Naive thymus-derived CD4-positive, alpha-beta T cell (primary cell): ENCODE measurements at regions of chr9 and their contacts with region 1.

Region 1: GRCh38 chr9:2158111-2158610 is 143.0 kb downstream of the SMARCA2 start:
- DNase-seq: peak in 8 of 9 donors; percentile 28 to 59 (median 53)
- ATAC-seq: peak; percentile 79
- H3K4me3 ChIP-seq: peak overlapping the region; percentile 46
- H3K4me3 Mint-ChIP-seq: peak overlapping the region; percentile 81 to 92 (median 85)
- H3K27ac ChIP-seq: peak overlapping the region; percentile 52
- H3K27ac Mint-ChIP-seq: peak overlapping the region; percentile 59 to 90 (median 81)
- H3K4me1 ChIP-seq: peaks cover 16 to 22% of the 10 kb centered on the region in 2 donors
- H3K4me1 Mint-ChIP-seq: peaks cover 36 to 86% (median 80%) of the 10 kb centered on the region in 7 donors
- H3K27me3 ChIP-seq: no peaks in the 10 kb centered on the region
- H3K27me3 Mint-ChIP-seq: no peaks in the 10 kb centered on the region

Region 2: GRCh38 chr9:1747417-1747967 is 410.7 kb before region 1 on chr9:
- CTCF ChIA-PET with region 1: no interaction called
- POLR2A ChIA-PET with region 1: no interaction called
- intact Hi-C with region 1: no loop called
- DNase-seq: no peak
- ATAC-seq: no peak
- H3K4me3 ChIP-seq: no peak overlapping the region
- H3K4me3 Mint-ChIP-seq: no peak overlapping the region
- H3K27ac ChIP-seq: no peak overlapping the region
- H3K27ac Mint-ChIP-seq: no peak overlapping the region
- H3K4me1 ChIP-seq: no peaks in the 10 kb centered on the region
- H3K4me1 Mint-ChIP-seq: no peaks in the 10 kb centered on the region
- H3K27me3 ChIP-seq: no peaks in the 10 kb centered on the region
- H3K27me3 Mint-ChIP-seq: peaks cover 0 to 34% (median 16%) of the 10 kb centered on the region in 5 donors

Region 3: DNA sequence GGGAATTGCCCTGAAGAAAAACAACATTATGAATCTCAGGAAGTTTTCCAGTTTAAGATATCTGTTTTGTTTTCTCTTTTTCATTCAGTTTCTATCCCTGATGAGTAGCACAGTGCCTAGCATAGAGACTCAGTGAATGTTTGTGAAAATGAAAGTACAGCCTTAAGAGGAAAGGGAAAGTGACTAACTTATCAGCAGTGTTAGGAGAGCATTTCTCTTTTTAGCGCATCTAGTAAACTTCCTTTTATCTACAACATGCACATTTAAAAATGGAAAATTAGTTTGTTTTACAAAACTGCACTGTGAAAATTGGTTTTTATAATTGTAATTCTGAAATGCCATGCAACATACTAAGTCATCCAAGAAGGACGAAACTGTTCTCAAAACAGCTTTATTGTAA is 32.3 kb before region 1 on chr9:
- CTCF ChIA-PET with region 1: no interaction called
- POLR2A ChIA-PET with region 1: no interaction called
- intact Hi-C with region 1: loop called (anchors 2 to 5 kb)
- DNase-seq: no peak
- ATAC-seq: peak; percentile 76
- H3K4me3 ChIP-seq: no peak overlapping the region
- H3K4me3 Mint-ChIP-seq: peak overlapping the region in 6 of 10 donors; percentile 29 to 54 (median 41)
- H3K27ac ChIP-seq: no peak overlapping the region
- H3K27ac Mint-ChIP-seq: peak overlapping the region in 8 of 9 donors; percentile 53 to 81 (median 75)
- H3K4me1 ChIP-seq: peaks cover 9 to 12% of the 10 kb centered on the region in 2 donors
- H3K4me1 Mint-ChIP-seq: peaks cover 19 to 67% (median 61%) of the 10 kb centered on the region in 7 donors
- H3K27me3 ChIP-seq: no peaks in the 10 kb centered on the region
- H3K27me3 Mint-ChIP-seq: no peaks in the 10 kb centered on the region

Region 4: GRCh38 chr9:2174306-2174705 is 16.1 kb after region 1 on chr9:
- CTCF ChIA-PET with region 1: no interaction called
- POLR2A ChIA-PET with region 1: no interaction called
- intact Hi-C with region 1: loop called (anchors 2 kb)
- DNase-seq: no peak
- ATAC-seq: no peak
- H3K4me3 ChIP-seq: no peak overlapping the region
- H3K4me3 Mint-ChIP-seq: peak overlapping the region in 1 of 10 donors; percentile 1
- H3K27ac ChIP-seq: no peak overlapping the region
- H3K27ac Mint-ChIP-seq: peak overlapping the region in 3 of 9 donors; percentile 8 to 57 (median 22)
- H3K4me1 ChIP-seq: no peaks in the 10 kb centered on the region
- H3K4me1 Mint-ChIP-seq: peaks cover 9 to 49% (median 31%) of the 10 kb centered on the region in 7 donors
- H3K27me3 ChIP-seq: no peaks in the 10 kb centered on the region
- H3K27me3 Mint-ChIP-seq: no peaks in the 10 kb centered on the region

Region 5: DNA sequence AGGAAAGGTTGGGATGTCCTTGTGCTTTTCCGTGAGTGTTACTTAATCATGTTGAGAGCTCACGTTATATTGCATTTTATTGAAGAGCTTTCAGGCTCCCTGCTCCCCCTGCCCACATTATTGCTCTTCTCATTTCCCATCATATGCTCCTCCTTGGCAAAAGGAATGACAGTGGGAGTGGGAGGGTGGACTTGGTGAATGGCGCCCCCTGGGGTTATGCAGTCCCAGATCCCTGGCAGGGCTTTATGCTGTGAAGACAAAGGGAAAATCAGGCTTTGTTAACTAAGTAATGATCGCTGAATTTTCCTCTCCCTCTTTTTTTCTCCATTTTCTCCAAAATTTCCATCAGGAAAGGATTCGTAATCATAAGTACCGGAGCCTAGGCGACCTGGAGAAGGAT is 23.6 kb after region 1 on chr9:
- CTCF ChIA-PET with region 1: no interaction called
- POLR2A ChIA-PET with region 1: interaction called, 3 read pairs
- intact Hi-C with region 1: loop called in 1 of 2 experiments (anchors 2 kb)
- DNase-seq: no peak
- ATAC-seq: no peak
- H3K4me3 ChIP-seq: no peak overlapping the region
- H3K4me3 Mint-ChIP-seq: no peak overlapping the region
- H3K27ac ChIP-seq: no peak overlapping the region
- H3K27ac Mint-ChIP-seq: peak overlapping the region in 2 of 9 donors; percentile 14 to 22
- H3K4me1 ChIP-seq: no peaks in the 10 kb centered on the region
- H3K4me1 Mint-ChIP-seq: peaks cover 0 to 7% (median 4%) of the 10 kb centered on the region in 7 donors
- H3K27me3 ChIP-seq: no peaks in the 10 kb centered on the region
- H3K27me3 Mint-ChIP-seq: no peaks in the 10 kb centered on the region

Region 6: GRCh38 chr9:2241836-2242741 is 83.9 kb after region 1 on chr9:
- CTCF ChIA-PET with region 1: no interaction called
- POLR2A ChIA-PET with region 1: no interaction called
- intact Hi-C with region 1: loop called in 1 of 2 experiments (anchors 1 kb)
- DNase-seq: peak; percentile 20 to 77 (median 48)
- ATAC-seq: peak; percentile 89
- H3K4me3 ChIP-seq: peak overlapping the region; percentile 43
- H3K4me3 Mint-ChIP-seq: peak overlapping the region; percentile 69 to 90 (median 80)
- H3K27ac ChIP-seq: no peak overlapping the region
- H3K27ac Mint-ChIP-seq: peak overlapping the region in 4 of 9 donors; percentile 17 to 50 (median 31)
- H3K4me1 ChIP-seq: no peaks in the 10 kb centered on the region
- H3K4me1 Mint-ChIP-seq: peaks cover 10 to 17% (median 17%) of the 10 kb centered on the region in 7 donors
- H3K27me3 ChIP-seq: peaks cover 0 to 4% of the 10 kb centered on the region in 2 donors
- H3K27me3 Mint-ChIP-seq: peaks cover 13 to 31% (median 24%) of the 10 kb centered on the region in 5 donors

Region 7: GRCh38 chr9:2613730-2614271 is 455.6 kb after region 1 on chr9:
- CTCF ChIA-PET with region 1: no interaction called
- POLR2A ChIA-PET with region 1: no interaction called
- intact Hi-C with region 1: no loop called
- DNase-seq: no peak
- ATAC-seq: no peak
- H3K4me3 ChIP-seq: no peak overlapping the region
- H3K4me3 Mint-ChIP-seq: no peak overlapping the region
- H3K27ac ChIP-seq: no peak overlapping the region
- H3K27ac Mint-ChIP-seq: no peak overlapping the region
- H3K4me1 ChIP-seq: no peaks in the 10 kb centered on the region
- H3K4me1 Mint-ChIP-seq: no peaks in the 10 kb centered on the region
- H3K27me3 ChIP-seq: no peaks in the 10 kb centered on the region
- H3K27me3 Mint-ChIP-seq: peaks cover 16 to 44% (median 34%) of the 10 kb centered on the region in 5 donors

Region 8: DNA sequence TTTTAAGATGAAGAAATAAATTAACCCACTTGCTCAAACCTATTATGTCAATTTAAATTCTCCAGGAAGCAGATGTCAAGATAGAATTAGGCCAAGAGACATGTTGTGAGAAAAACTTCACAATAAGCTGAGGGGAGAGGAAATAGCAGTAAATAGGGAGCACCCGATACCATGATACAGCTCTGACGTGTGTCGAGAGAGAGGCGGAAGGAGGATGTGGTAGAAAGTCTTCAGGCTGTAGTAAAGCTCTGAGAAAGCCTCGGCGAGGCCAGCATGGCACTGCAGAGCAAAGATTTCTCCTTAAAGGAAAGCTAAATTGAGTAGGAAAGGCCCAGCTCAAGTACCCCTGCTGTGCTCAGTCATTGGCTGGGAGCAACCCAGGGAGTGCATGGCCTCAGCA is 691.8 kb after region 1 on chr9:
- CTCF ChIA-PET with region 1: no interaction called
- POLR2A ChIA-PET with region 1: no interaction called
- intact Hi-C with region 1: loop called in 1 of 2 experiments (anchors 10 kb)
- DNase-seq: peak in 3 of 9 donors; percentile 22 to 34 (median 29)
- ATAC-seq: peak; percentile 79
- H3K4me3 ChIP-seq: no peak overlapping the region
- H3K4me3 Mint-ChIP-seq: no peak overlapping the region
- H3K27ac ChIP-seq: no peak overlapping the region
- H3K27ac Mint-ChIP-seq: peak overlapping the region in 4 of 9 donors; percentile 17 to 82 (median 42)
- H3K4me1 ChIP-seq: peaks cover 5% of the 10 kb centered on the region in 2 donors
- H3K4me1 Mint-ChIP-seq: peaks cover 5 to 16% (median 9%) of the 10 kb centered on the region in 7 donors
- H3K27me3 ChIP-seq: no peaks in the 10 kb centered on the region
- H3K27me3 Mint-ChIP-seq: peaks cover 1 to 17% (median 13%) of the 10 kb centered on the region in 5 donors